ENCODE measurements at regions of chr21 and their contacts with region 1.

Region 1: DNA sequence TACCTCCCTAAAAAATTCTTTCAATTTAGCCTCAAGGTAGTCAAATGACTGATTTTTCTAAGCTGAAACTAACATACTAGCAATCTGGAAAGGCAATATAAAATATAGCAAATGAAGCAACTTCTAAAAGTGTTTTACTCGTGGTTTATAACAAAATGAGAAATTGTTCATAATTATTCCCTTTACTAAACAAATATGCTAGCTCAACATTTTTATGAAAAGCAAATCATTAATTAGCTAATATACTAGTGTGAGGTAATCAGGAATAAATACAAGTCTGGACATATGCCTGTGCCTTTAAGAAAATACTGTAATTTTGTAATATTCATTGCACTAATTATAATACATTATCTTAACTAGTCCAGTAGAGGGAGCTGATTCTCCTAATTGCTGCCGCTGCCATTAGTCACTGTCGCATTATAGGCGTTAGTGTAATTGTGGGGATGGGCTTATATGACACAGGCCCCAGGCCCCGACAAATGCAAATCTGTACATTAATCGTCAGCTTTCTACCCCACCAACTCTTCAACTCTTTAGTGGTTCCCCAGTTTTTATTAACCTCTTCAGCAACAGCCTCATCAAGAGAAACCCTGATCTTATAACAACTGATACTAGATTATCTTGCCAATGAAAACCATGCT is 160.9 kb downstream of the GABPA start:
- DNase-seq: peak; percentile 21
- H3K4me3 ChIP-seq: no peak overlapping the region
- H3K27ac ChIP-seq: no peak overlapping the region
- H3K4me1 ChIP-seq: peaks cover 16% of the 10 kb centered on the region
- H3K27me3 ChIP-seq: no peaks in the 10 kb centered on the region
- CTCF ChIP-seq: peak; percentile 52 to 66

Region 2: DNA sequence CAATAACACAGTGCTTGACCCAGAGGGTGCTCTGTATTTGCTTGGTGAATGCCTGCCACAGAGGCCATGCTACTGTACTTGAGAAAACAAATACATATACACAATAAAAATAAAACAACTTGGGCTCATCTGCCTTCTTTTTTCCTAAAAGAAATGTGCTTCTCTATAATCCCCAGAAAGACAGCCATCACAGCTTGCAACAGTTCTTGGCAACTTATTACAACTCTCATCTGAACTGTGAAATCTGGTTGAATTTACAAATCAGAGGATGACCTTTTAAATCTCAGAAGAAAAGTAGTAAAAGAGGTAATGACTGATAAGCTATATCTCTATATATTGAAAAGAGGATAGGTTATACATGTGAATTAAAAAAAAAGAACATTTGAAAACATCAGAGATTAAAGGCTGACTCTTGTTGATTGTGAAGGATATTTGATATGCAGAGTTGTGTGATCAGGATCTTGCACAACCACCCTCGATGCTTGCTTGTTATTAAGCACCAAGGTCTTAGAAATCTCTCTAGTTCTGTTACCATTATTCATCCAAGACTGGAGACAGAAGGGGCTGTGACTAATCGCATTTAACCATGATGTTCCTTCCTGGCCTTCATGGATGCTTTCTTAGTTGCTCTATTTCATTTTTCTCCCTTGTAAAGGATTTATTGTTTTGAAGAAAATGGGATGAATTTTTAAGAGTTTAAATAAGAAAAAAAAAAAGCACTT is 61.5 kb after region 1 on chr21:
- CTCF ChIA-PET with region 1: no interaction called
- dilution Hi-C with region 1: no loop called
- in situ Hi-C with region 1: no loop called
- intact Hi-C with region 1: loop called (anchors 10 kb)
- DNase-seq: peak; percentile 52
- H3K4me3 ChIP-seq: no peak overlapping the region
- H3K27ac ChIP-seq: no peak overlapping the region
- H3K4me1 ChIP-seq: peaks cover 17% of the 10 kb centered on the region
- H3K27me3 ChIP-seq: no peaks in the 10 kb centered on the region
- CTCF ChIP-seq: no peak

Region 3: GRCh38 chr21:25970254-25970930 is 74.7 kb after region 1 on chr21:
- CTCF ChIA-PET with region 1: no interaction called
- dilution Hi-C with region 1: no loop called
- in situ Hi-C with region 1: no loop called
- intact Hi-C with region 1: loop called (anchors 5 kb)
- DNase-seq: no peak
- H3K4me3 ChIP-seq: no peak overlapping the region
- H3K27ac ChIP-seq: no peak overlapping the region
- H3K4me1 ChIP-seq: peaks cover 8% of the 10 kb centered on the region
- H3K27me3 ChIP-seq: no peaks in the 10 kb centered on the region
- CTCF ChIP-seq: no peak

Region 4: GRCh38 chr21:25980710-25981109 is 85.0 kb after region 1 on chr21:
- CTCF ChIA-PET with region 1: no interaction called
- dilution Hi-C with region 1: no loop called
- in situ Hi-C with region 1: no loop called
- intact Hi-C with region 1: no loop called
- DNase-seq: peak; percentile 93
- H3K4me3 ChIP-seq: no peak overlapping the region
- H3K27ac ChIP-seq: peak overlapping the region; percentile 78
- H3K4me1 ChIP-seq: peaks cover 18% of the 10 kb centered on the region
- H3K27me3 ChIP-seq: no peaks in the 10 kb centered on the region
- CTCF ChIP-seq: no peak

Region 5: GRCh38 chr21:26153758-26154157 is 258.1 kb after region 1 on chr21:
- CTCF ChIA-PET with region 1: interaction called, 5 read pairs
- dilution Hi-C with region 1: loop called (anchors 10 kb)
- in situ Hi-C with region 1: no loop called
- intact Hi-C with region 1: no loop called
- DNase-seq: no peak
- H3K4me3 ChIP-seq: no peak overlapping the region
- H3K27ac ChIP-seq: no peak overlapping the region
- H3K4me1 ChIP-seq: peaks cover 16% of the 10 kb centered on the region
- H3K27me3 ChIP-seq: no peaks in the 10 kb centered on the region
- CTCF ChIP-seq: no peak

Region 6: DNA sequence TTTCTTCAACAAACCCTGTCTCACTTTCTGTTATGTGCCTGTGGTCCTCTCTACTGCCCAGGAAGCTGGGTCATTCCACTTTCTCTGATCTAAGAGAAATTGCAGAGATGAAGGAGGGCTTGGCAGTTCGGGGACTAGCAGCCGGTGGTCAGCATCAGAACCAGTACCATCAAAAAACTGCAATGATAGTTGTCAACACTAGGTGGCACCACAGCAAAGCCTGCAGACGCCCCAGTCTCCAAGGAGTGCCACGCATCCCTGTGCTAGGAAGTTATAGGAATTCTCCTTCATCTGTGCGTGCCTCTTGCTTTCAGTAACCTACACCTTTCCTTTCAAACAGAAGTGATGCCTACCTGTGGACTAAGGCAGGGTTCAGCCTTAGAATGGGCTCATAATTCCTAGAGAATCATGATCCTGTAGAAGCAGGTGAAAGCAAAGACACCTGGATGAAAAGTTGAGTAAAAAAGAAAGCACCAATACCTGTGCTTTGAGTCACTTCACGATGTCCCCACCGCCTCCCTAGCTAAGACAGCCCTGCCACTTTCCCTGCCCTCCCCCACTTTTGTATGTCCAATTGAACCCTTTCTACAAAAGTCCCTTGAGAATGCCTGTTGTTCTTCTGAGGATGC is 820.3 kb after region 1 on chr21:
- CTCF ChIA-PET with region 1: no interaction called
- dilution Hi-C with region 1: no loop called
- in situ Hi-C with region 1: loop called in 1 of 2 experiments (anchors 25 kb)
- intact Hi-C with region 1: loop called (anchors 5 kb)
- DNase-seq: peak; percentile 42
- H3K4me3 ChIP-seq: peak overlapping the region in 1 of 3 experiments; percentile 23
- H3K27ac ChIP-seq: no peak overlapping the region
- H3K4me1 ChIP-seq: peaks cover 4% of the 10 kb centered on the region
- H3K27me3 ChIP-seq: no peaks in the 10 kb centered on the region
- CTCF ChIP-seq: peak; percentile 85 to 86

Measured in mammary epithelial cell (primary cell).